ENCODE measurements at regions of chr1 and their contacts with region 1.

Region 1: DNA sequence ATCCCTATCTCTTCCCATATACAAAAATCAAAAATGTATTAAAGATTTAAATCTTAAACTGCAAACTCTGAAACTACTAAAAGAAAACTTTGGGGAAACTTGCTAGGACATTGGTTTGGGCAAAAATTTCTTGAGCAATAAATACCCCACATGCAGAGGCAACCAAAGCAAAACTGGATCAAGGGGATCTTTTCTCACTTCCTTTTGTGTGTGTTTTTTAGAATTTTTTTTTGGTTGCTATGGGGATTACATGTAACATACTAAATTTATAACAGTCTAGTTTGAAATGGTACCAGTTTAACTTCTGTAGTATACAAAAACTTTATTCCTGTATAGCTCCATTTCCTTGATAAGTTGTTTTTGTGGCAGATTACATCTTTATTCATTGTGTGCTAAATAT is 16.8 kb downstream of the MAST2 start:
- DNase-seq: no peak
- H3K4me3 Mint-ChIP-seq: no peak overlapping the region
- H3K27ac Mint-ChIP-seq: no peak overlapping the region
- H3K4me1 Mint-ChIP-seq: peaks cover 12% of the 10 kb centered on the region
- H3K27me3 Mint-ChIP-seq: no peaks in the 10 kb centered on the region
- CTCF ChIP-seq: no peak

Region 2: GRCh38 chr1:45629035-45629434 is 191.1 kb before region 1 on chr1:
- CTCF ChIA-PET with region 1: no interaction called
- intact Hi-C with region 1: no loop called
- DNase-seq: no peak
- H3K4me3 Mint-ChIP-seq: no peak overlapping the region
- H3K27ac Mint-ChIP-seq: no peak overlapping the region
- H3K4me1 Mint-ChIP-seq: no peaks in the 10 kb centered on the region
- H3K27me3 Mint-ChIP-seq: no peaks in the 10 kb centered on the region
- CTCF ChIP-seq: no peak

Region 3: GRCh38 chr1:45924736-45925135 is 104.6 kb after region 1 on chr1:
- CTCF ChIA-PET with region 1: interaction called, 10 read pairs
- intact Hi-C with region 1: no loop called
- DNase-seq: peak; percentile 41
- H3K4me3 Mint-ChIP-seq: no peak overlapping the region
- H3K27ac Mint-ChIP-seq: peak overlapping the region; percentile 83
- H3K4me1 Mint-ChIP-seq: peaks cover 41% of the 10 kb centered on the region
- H3K27me3 Mint-ChIP-seq: no peaks in the 10 kb centered on the region
- CTCF ChIP-seq: no peak

Region 4: GRCh38 chr1:45945426-45945825 is 125.3 kb after region 1 on chr1:
- CTCF ChIA-PET with region 1: no interaction called
- intact Hi-C with region 1: no loop called
- DNase-seq: peak; percentile 52
- H3K4me3 Mint-ChIP-seq: no peak overlapping the region
- H3K27ac Mint-ChIP-seq: peak overlapping the region; percentile 67
- H3K4me1 Mint-ChIP-seq: peaks cover 42% of the 10 kb centered on the region
- H3K27me3 Mint-ChIP-seq: no peaks in the 10 kb centered on the region
- CTCF ChIP-seq: no peak